CD8-positive, alpha-beta T cell (primary cell): ENCODE measurements at regions of chr5 and their contacts with region 1.

Region 1: DNA sequence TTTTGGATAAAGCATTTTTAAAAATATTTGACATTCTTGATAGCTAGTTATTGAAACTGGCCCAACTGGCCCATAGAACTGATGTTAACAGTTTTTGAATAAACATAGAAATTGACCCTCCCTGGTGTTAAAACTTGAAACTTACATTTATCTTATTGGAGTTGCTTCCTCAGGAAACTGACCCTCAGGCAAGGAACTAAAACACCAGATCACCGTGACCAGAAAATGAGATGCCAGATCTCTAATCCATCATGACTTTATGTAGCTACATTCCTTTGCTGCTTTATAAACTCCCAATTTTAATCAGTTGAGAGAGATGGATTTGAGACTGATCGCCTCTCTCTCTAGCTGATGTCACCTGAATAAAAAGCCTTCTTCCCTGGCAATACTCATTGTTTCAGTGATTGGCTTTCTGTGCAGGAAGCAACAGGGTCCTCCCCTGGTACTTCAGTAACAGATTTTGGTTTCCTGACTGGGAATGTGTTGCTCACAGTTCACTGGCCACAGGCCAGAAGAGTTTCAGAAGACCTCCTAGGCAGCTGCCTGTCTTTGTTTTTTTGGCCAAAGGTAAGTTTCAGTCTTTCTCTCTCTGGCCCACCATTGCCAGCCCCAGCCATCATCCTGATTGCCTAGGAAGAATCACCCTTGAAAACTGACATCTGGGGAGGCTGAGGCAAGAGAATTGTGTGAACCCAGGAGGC is 212.4 kb downstream of the DTWD2 start:
- DNase-seq: no peak
- ATAC-seq: no peak
- H3K4me3 ChIP-seq: no peak overlapping the region
- H3K4me3 Mint-ChIP-seq: no peak overlapping the region
- H3K27ac ChIP-seq: no peak overlapping the region
- H3K27ac Mint-ChIP-seq: no peak overlapping the region
- H3K4me1 ChIP-seq: no peaks in the 10 kb centered on the region
- H3K4me1 Mint-ChIP-seq: no peaks in the 10 kb centered on the region
- H3K27me3 ChIP-seq: no peaks in the 10 kb centered on the region
- H3K27me3 Mint-ChIP-seq: peaks cover 9% of the 10 kb centered on the region
- CTCF ChIP-seq: no peak

Region 2: GRCh38 chr5:118692811-118693342 is 83.1 kb before region 1 on chr5:
- CTCF ChIA-PET with region 1: no interaction called
- POLR2A ChIA-PET with region 1: no interaction called
- intact Hi-C with region 1: no loop called
- DNase-seq: no peak
- ATAC-seq: no peak
- H3K4me3 ChIP-seq: no peak overlapping the region
- H3K4me3 Mint-ChIP-seq: no peak overlapping the region
- H3K27ac ChIP-seq: no peak overlapping the region
- H3K27ac Mint-ChIP-seq: no peak overlapping the region
- H3K4me1 ChIP-seq: no peaks in the 10 kb centered on the region
- H3K4me1 Mint-ChIP-seq: no peaks in the 10 kb centered on the region
- H3K27me3 ChIP-seq: no peaks in the 10 kb centered on the region
- H3K27me3 Mint-ChIP-seq: no peaks in the 10 kb centered on the region
- CTCF ChIP-seq: no peak

Region 3: DNA sequence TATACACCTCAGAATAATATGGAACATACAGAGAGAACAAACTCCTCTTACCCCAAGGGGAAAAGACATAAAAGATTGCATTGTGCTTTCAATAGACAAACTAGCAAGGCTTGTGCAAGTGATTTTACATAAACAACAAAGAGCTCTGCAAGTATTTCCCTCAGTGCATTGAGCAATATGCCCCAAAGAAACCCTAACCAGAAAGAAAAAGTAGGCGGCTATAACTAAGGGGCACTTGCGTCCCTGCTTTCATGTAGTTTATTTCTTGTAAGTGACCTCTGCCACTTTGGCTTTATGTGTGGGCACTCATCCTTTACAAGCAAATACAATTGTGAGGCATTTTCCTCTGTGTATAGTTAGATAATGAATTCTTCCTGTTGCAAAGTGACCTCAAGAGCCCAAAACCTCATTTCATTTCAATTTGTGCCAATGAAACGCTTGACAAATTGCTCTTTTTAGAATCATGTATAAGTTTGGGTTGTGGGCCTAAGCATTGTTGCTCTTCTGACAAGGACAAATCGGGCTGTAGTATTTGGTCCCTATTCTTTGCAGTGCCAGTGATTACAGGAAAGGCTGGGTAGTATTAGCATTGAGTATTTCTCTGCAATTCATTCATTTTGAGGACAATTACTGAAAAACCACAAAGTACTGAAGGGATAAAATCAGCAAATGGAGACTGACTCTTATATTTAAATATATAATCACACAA is 69.8 kb before region 1 on chr5:
- CTCF ChIA-PET with region 1: no interaction called
- POLR2A ChIA-PET with region 1: no interaction called
- intact Hi-C with region 1: no loop called
- DNase-seq: no peak
- ATAC-seq: no peak
- H3K4me3 ChIP-seq: no peak overlapping the region
- H3K4me3 Mint-ChIP-seq: no peak overlapping the region
- H3K27ac ChIP-seq: no peak overlapping the region
- H3K27ac Mint-ChIP-seq: no peak overlapping the region
- H3K4me1 ChIP-seq: no peaks in the 10 kb centered on the region
- H3K4me1 Mint-ChIP-seq: no peaks in the 10 kb centered on the region
- H3K27me3 ChIP-seq: no peaks in the 10 kb centered on the region
- H3K27me3 Mint-ChIP-seq: no peaks in the 10 kb centered on the region
- CTCF ChIP-seq: no peak

Region 4: DNA sequence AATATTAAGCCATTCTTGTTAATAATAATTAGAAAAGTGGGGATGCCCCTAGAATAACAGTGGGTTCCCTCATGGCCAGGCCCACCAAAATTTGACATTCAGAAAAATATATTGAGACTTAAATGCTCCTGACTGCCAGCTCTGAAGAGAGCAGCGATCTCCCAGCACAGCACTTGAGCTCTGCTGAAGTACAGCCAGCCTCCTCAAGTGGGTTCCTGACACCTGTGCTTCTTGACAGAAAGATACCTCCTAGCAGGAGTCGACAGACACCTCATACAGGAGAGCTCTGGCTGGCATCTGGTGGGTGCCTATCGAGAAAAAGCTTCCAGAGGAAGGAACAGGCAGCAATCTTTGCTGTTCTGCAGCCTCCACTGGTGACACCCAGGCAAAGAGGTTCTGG is 49.1 kb before region 1 on chr5:
- CTCF ChIA-PET with region 1: no interaction called
- POLR2A ChIA-PET with region 1: no interaction called
- intact Hi-C with region 1: no loop called
- DNase-seq: no peak
- ATAC-seq: no peak
- H3K4me3 ChIP-seq: no peak overlapping the region
- H3K4me3 Mint-ChIP-seq: no peak overlapping the region
- H3K27ac ChIP-seq: no peak overlapping the region
- H3K27ac Mint-ChIP-seq: no peak overlapping the region
- H3K4me1 ChIP-seq: no peaks in the 10 kb centered on the region
- H3K4me1 Mint-ChIP-seq: no peaks in the 10 kb centered on the region
- H3K27me3 ChIP-seq: no peaks in the 10 kb centered on the region
- H3K27me3 Mint-ChIP-seq: no peaks in the 10 kb centered on the region
- CTCF ChIP-seq: no peak

Region 5: DNA sequence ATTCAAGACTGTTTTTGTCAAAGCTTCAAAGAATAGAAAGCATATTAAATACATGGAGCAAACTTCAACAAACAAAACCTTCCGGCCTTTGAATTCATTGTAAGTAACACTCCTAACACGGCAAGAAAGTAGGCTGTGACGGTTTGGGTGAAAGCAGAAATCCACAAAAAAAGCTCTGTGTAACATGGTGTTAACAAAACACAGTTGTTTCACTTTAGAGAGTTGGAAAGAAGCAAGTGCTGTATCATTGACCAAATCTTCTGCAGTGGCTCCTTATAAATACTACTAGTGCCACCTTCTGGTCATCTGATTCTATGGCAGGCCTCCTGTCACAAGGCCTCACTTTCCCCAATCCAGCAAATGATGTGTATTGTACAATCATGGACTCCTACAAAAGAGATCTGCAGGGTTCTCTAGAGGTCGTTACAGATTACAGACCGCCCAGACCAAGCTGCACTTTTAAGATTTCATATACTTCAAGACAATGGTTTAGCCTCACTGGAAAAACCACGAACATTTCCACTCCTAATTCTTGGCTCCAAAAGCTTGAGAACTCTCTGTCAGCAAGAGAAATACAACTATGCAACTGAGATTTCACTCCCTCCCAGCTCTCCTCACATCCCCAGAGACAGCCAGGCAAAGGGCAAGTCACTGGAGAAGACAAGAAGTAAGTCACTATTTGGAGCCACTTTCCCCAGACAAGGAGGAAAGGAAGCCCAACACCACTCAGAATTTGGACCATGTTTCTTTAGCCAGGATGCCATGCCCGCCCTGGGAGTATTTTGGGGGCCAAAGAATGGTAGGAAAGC is 16.2 kb after region 1 on chr5:
- CTCF ChIA-PET with region 1: interaction called, 10 read pairs
- POLR2A ChIA-PET with region 1: no interaction called
- intact Hi-C with region 1: no loop called
- DNase-seq: peak in 2 of 9 experiments; percentile 26 to 33
- ATAC-seq: no peak
- H3K4me3 ChIP-seq: no peak overlapping the region
- H3K4me3 Mint-ChIP-seq: no peak overlapping the region
- H3K27ac ChIP-seq: no peak overlapping the region
- H3K27ac Mint-ChIP-seq: no peak overlapping the region
- H3K4me1 ChIP-seq: no peaks in the 10 kb centered on the region
- H3K4me1 Mint-ChIP-seq: no peaks in the 10 kb centered on the region
- H3K27me3 ChIP-seq: no peaks in the 10 kb centered on the region
- H3K27me3 Mint-ChIP-seq: peaks cover 3% of the 10 kb centered on the region
- CTCF ChIP-seq: peak; percentile 42